Activated CD4-positive, alpha-beta T cell treated with anti-CD3 and anti-CD28 coated beads, Interleukin-2, amount 10 ng/mL, durations not matched to agents 24 days and 14 days (primary cell): ENCODE measurements at regions of chr9 and their contacts with region 1.

Region 1: GRCh38 chr9:31445960-31446359 is 938.5 kb upstream of the ACO1 start:
- DNase-seq: no peak
- H3K4me3 Mint-ChIP-seq: no peak overlapping the region
- H3K27ac Mint-ChIP-seq: no peak overlapping the region
- H3K4me1 Mint-ChIP-seq: peaks cover 8% of the 10 kb centered on the region
- H3K27me3 Mint-ChIP-seq: no peaks in the 10 kb centered on the region

Region 2: DNA sequence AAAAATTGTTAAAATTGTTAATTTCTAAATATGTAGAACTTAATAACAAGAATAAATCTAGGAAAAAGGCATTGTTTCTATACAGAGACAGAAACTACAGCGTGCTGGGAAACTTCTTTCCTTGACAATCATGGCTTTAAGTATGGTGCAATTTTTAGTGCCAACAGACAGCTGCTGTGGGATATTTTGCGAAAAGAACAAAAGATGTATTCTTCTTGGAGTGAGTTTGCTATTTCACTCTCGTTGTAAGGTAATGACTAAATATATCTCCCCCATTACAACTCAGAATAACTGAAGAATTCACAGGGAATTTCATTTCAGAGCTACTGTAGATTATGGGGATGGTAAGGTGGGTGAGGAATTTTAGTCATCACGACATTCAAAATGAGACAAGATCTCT is 1116.5 kb before region 1 on chr9:
- intact Hi-C with region 1: no loop called
- DNase-seq: no peak
- H3K4me3 Mint-ChIP-seq: no peak overlapping the region
- H3K27ac Mint-ChIP-seq: no peak overlapping the region
- H3K4me1 Mint-ChIP-seq: no peaks in the 10 kb centered on the region
- H3K27me3 Mint-ChIP-seq: no peaks in the 10 kb centered on the region

Region 3: DNA sequence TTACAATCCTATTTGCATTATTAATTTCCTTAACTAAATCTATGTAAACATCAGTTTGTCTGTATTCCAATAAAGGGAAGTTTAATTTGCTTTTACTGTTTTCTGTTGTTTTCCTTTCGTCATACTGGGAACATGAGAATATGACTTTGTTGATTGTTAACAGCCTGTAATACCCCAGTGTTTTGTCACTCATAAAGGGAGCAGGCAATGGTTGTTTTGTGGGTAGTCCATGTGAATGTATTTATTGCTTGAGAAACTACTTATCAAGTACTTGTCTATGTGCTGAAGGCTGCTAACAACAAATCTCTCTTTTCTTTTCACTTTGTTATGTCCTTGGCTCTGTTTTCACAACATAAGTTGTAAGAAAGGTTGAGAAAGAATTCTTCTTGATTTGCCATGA is 131.7 kb before region 1 on chr9:
- intact Hi-C with region 1: no loop called
- DNase-seq: no peak
- H3K4me3 Mint-ChIP-seq: no peak overlapping the region
- H3K27ac Mint-ChIP-seq: no peak overlapping the region
- H3K4me1 Mint-ChIP-seq: no peaks in the 10 kb centered on the region
- H3K27me3 Mint-ChIP-seq: peaks cover 3% of the 10 kb centered on the region

Region 4: DNA sequence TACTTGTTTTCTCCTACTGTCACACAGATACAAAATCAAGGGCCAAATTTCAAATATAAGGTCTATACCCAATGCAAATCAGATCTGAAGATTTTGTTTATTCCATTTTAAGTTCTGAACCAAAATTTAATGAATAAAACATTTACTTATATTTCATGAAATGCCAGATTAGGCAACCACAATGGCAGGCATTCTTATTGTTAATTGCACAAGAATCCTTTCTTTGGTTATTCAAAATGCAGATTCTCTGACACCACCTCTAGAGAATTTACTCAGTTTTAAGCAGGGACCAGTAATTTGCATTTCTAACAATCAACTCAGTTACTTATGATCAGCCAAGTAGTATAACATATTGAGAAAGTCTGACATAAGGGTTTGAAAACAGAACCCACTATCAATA is 33.9 kb before region 1 on chr9:
- intact Hi-C with region 1: loop called (anchors 10 kb)
- DNase-seq: no peak
- H3K4me3 Mint-ChIP-seq: no peak overlapping the region
- H3K27ac Mint-ChIP-seq: no peak overlapping the region
- H3K4me1 Mint-ChIP-seq: no peaks in the 10 kb centered on the region
- H3K27me3 Mint-ChIP-seq: no peaks in the 10 kb centered on the region

Region 5: DNA sequence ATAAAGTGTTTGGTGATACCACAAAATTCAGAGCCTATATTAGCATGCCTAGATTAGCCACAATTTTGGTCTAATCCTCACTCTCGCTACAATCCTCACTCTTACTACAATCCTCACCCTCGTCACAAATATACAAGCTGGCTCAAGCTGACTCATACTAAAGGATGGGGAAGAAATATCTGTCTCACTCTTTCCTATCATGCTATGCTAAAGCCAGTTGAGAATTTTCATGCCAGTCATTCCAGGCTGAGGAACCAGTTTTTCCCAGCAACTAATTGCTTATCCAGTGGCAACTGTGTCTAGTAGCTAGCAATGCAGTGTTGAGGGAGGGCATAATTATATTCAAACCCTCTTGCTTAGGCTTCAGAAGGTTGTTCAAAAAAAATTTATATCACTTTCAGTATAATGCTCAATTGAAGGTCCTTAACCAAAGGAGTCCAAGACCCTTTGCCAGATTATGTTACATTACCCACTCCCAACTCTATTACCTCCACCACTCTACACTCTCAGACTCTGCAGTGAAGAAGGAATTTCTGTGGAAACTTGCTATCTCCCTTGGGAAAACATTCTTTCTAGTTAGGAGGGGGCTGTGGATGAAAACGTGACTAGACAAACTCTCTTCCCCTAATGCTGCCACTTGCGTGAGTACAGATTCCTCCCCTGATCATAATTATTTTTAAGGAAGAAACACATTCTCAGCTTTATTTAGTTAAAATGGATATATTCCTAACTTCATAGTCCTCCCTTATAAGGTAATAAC is 128.2 kb after region 1 on chr9:
- intact Hi-C with region 1: no loop called
- DNase-seq: no peak
- H3K4me3 Mint-ChIP-seq: no peak overlapping the region
- H3K27ac Mint-ChIP-seq: no peak overlapping the region
- H3K4me1 Mint-ChIP-seq: no peaks in the 10 kb centered on the region
- H3K27me3 Mint-ChIP-seq: no peaks in the 10 kb centered on the region